ENCODE measurements at regions of chr17 and their contacts with region 1.

Region 1: GRCh38 chr17:27455914-27456680 is at the start of gene KSR1:
- DNase-seq: peak; percentile 45 to 90 (median 79)
- ATAC-seq: peak; percentile 92
- H3K4me3 ChIP-seq: peak within 1 kb of the TSS; percentile 70 to 89
- H3K4me3 Mint-ChIP-seq: peak within 1 kb of the TSS; percentile 90
- H3K27ac ChIP-seq: peak within 1 kb of the TSS; percentile 54 to 56
- H3K27ac Mint-ChIP-seq: peak within 1 kb of the TSS; percentile 38
- H3K4me1 ChIP-seq: peaks cover 19% of the 10 kb centered on the region
- H3K4me1 Mint-ChIP-seq: peaks cover 27% of the 10 kb centered on the region
- H3K27me3 ChIP-seq: no peaks in the 10 kb centered on the region
- H3K27me3 Mint-ChIP-seq: no peaks in the 10 kb centered on the region
- CTCF ChIP-seq: peak; percentile 40
- total RNA-seq, gene KSR1: 23.3 to 25.6 TPM

Region 2: GRCh38 chr17:27293898-27294688 is 162.0 kb before region 1 on chr17 and contains the start of gene WSB1:
- CTCF ChIA-PET with region 1: no interaction called
- POLR2A ChIA-PET with region 1: interaction called, 8 read pairs
- intact Hi-C with region 1: loop called (anchors 1 kb)
- DNase-seq: peak; percentile 86 to 97 (median 92)
- ATAC-seq: peak; percentile 84
- H3K4me3 ChIP-seq: peak within 1 kb of the TSS; percentile 89 to 99
- H3K4me3 Mint-ChIP-seq: peak within 1 kb of the TSS; percentile 93
- H3K27ac ChIP-seq: peak within 1 kb of the TSS; percentile 98 to 99
- H3K27ac Mint-ChIP-seq: peak within 1 kb of the TSS; percentile 100
- H3K4me1 ChIP-seq: peaks cover 27% of the 10 kb centered on the region
- H3K4me1 Mint-ChIP-seq: peaks cover 36% of the 10 kb centered on the region
- H3K27me3 ChIP-seq: no peaks in the 10 kb centered on the region
- H3K27me3 Mint-ChIP-seq: no peaks in the 10 kb centered on the region
- CTCF ChIP-seq: no peak
- total RNA-seq, gene WSB1: 89.0 to 91.1 TPM

Region 3: GRCh38 chr17:27353461-27354050 is 102.5 kb before region 1 on chr17:
- CTCF ChIA-PET with region 1: interaction called, 3 read pairs
- POLR2A ChIA-PET with region 1: no interaction called
- intact Hi-C with region 1: loop called (anchors 1 to 5 kb)
- DNase-seq: peak; percentile 67 to 94 (median 86)
- ATAC-seq: peak; percentile 95
- H3K4me3 ChIP-seq: peak overlapping the region; percentile 66 to 78
- H3K4me3 Mint-ChIP-seq: peak overlapping the region; percentile 77
- H3K27ac ChIP-seq: peak overlapping the region; percentile 68 to 84
- H3K27ac Mint-ChIP-seq: peak overlapping the region; percentile 93
- H3K4me1 ChIP-seq: peaks cover 18% of the 10 kb centered on the region
- H3K4me1 Mint-ChIP-seq: peaks cover 17% of the 10 kb centered on the region
- H3K27me3 ChIP-seq: no peaks in the 10 kb centered on the region
- H3K27me3 Mint-ChIP-seq: no peaks in the 10 kb centered on the region
- CTCF ChIP-seq: peak; percentile 91

Region 4: GRCh38 chr17:27466743-27467375 is 10.8 kb after region 1 on chr17:
- CTCF ChIA-PET with region 1: interaction called, 3 read pairs
- POLR2A ChIA-PET with region 1: interaction called, 13 read pairs
- intact Hi-C with region 1: loop called in 1 of 2 experiments (anchors 2 kb)
- DNase-seq: peak in 6 of 9 experiments; percentile 25 to 63 (median 42)
- ATAC-seq: peak; percentile 73
- H3K4me3 ChIP-seq: no peak overlapping the region
- H3K4me3 Mint-ChIP-seq: peak overlapping the region; percentile 51
- H3K27ac ChIP-seq: peak overlapping the region in 1 of 2 experiments; percentile 22
- H3K27ac Mint-ChIP-seq: peak overlapping the region; percentile 15
- H3K4me1 ChIP-seq: peaks cover 18% of the 10 kb centered on the region
- H3K4me1 Mint-ChIP-seq: peaks cover 37% of the 10 kb centered on the region
- H3K27me3 ChIP-seq: no peaks in the 10 kb centered on the region
- H3K27me3 Mint-ChIP-seq: no peaks in the 10 kb centered on the region
- CTCF ChIP-seq: no peak

Region 5: GRCh38 chr17:27473748-27474609 is 17.9 kb after region 1 on chr17:
- CTCF ChIA-PET with region 1: interaction called, 3 read pairs
- POLR2A ChIA-PET with region 1: interaction called, 10 read pairs
- intact Hi-C with region 1: loop called (anchors 1 to 2 kb)
- DNase-seq: peak; percentile 18 to 90 (median 64)
- ATAC-seq: peak; percentile 3
- H3K4me3 ChIP-seq: peak overlapping the region in 1 of 2 experiments; percentile 29
- H3K4me3 Mint-ChIP-seq: peak overlapping the region; percentile 57
- H3K27ac ChIP-seq: peak overlapping the region; percentile 22 to 90
- H3K27ac Mint-ChIP-seq: peak overlapping the region; percentile 94
- H3K4me1 ChIP-seq: peaks cover 36% of the 10 kb centered on the region
- H3K4me1 Mint-ChIP-seq: peaks cover 57% of the 10 kb centered on the region
- H3K27me3 ChIP-seq: no peaks in the 10 kb centered on the region
- H3K27me3 Mint-ChIP-seq: no peaks in the 10 kb centered on the region
- CTCF ChIP-seq: no peak

Region 6: GRCh38 chr17:27489045-27489715 is 33.1 kb after region 1 on chr17:
- CTCF ChIA-PET with region 1: no interaction called
- POLR2A ChIA-PET with region 1: no interaction called
- intact Hi-C with region 1: no loop called
- DNase-seq: no peak
- ATAC-seq: no peak
- H3K4me3 ChIP-seq: no peak overlapping the region
- H3K4me3 Mint-ChIP-seq: no peak overlapping the region
- H3K27ac ChIP-seq: no peak overlapping the region
- H3K27ac Mint-ChIP-seq: no peak overlapping the region
- H3K4me1 ChIP-seq: no peaks in the 10 kb centered on the region
- H3K4me1 Mint-ChIP-seq: no peaks in the 10 kb centered on the region
- H3K27me3 ChIP-seq: no peaks in the 10 kb centered on the region
- H3K27me3 Mint-ChIP-seq: no peaks in the 10 kb centered on the region
- CTCF ChIP-seq: no peak

Region 7: GRCh38 chr17:27544350-27545131 is 88.4 kb after region 1 on chr17:
- CTCF ChIA-PET with region 1: no interaction called
- POLR2A ChIA-PET with region 1: no interaction called
- intact Hi-C with region 1: loop called in 1 of 2 experiments (anchors 10 kb)
- DNase-seq: peak in 3 of 9 experiments; percentile 17 to 61 (median 44)
- ATAC-seq: peak; percentile 62
- H3K4me3 ChIP-seq: no peak overlapping the region
- H3K4me3 Mint-ChIP-seq: no peak overlapping the region
- H3K27ac ChIP-seq: no peak overlapping the region
- H3K27ac Mint-ChIP-seq: peak overlapping the region; percentile 37
- H3K4me1 ChIP-seq: peaks cover 13% of the 10 kb centered on the region
- H3K4me1 Mint-ChIP-seq: peaks cover 50% of the 10 kb centered on the region
- H3K27me3 ChIP-seq: no peaks in the 10 kb centered on the region
- H3K27me3 Mint-ChIP-seq: no peaks in the 10 kb centered on the region
- CTCF ChIP-seq: no peak

Region 8: DNA sequence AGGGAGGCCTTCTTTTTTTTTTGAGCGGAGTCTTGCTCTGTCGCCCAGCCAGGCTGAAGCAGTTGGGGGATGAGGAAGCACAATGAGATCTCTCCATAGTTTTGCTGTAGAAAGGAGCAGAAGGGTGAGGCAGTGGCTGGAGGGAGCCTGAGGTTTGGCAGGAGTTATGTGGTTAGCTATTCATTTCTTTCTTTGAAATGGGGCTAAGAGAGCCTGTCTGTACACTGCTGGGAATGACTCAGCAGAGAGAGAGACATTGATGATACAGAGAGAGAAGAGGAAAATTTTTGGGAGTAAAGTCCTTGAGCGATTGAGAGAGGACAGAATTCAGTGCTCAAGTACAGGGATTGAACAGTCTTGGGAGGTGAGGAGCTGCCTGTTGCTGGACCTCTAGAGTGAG is 322.1 kb after region 1 on chr17:
- CTCF ChIA-PET with region 1: no interaction called
- POLR2A ChIA-PET with region 1: no interaction called
- intact Hi-C with region 1: no loop called
- DNase-seq: no peak
- ATAC-seq: no peak
- H3K4me3 ChIP-seq: no peak overlapping the region
- H3K4me3 Mint-ChIP-seq: no peak overlapping the region
- H3K27ac ChIP-seq: no peak overlapping the region
- H3K27ac Mint-ChIP-seq: no peak overlapping the region
- H3K4me1 ChIP-seq: no peaks in the 10 kb centered on the region
- H3K4me1 Mint-ChIP-seq: no peaks in the 10 kb centered on the region
- H3K27me3 ChIP-seq: no peaks in the 10 kb centered on the region
- H3K27me3 Mint-ChIP-seq: no peaks in the 10 kb centered on the region
- CTCF ChIP-seq: no peak

Region 9: DNA sequence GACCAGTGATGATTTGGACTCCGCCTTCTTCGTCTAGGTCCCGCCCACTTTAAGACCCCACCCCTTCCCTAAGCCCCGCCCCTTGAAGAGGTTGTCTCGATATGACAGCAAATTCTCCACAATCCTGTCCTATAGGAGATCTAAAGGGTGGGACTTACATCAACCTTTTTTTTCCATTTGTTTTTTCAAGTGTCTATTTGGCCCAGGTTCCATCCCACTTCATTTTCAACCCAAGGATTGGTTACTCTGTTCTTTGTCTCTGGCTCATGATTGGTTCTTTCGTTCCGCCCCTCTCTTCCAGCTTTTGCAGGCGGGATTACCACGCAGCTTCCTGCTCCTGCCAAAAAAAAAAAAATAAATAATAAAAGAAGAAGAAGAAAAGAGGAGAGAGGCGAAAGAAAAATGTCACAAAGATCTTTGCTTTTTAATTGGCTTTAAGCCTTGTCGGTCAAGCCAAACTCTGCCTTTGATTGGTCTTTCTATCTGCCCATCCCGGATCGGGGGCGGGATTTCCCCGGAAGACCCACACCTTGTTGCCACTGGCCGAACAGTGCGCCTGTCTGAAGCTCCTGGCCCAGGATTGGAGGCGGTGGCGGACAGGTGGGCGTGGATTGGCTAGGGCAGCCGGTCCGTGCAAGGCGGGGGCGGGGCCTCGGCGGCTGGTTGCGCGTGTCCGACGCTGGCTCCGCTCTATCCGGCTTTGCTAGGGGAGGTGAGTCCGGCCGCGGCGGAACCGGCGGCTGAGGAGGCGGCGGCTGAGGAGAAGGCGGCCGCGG is 585.2 kb after region 1 on chr17:
- CTCF ChIA-PET with region 1: no interaction called
- POLR2A ChIA-PET with region 1: no interaction called
- intact Hi-C with region 1: loop called in 1 of 2 experiments (anchors 5 kb)
- DNase-seq: peak; percentile 97 to 100 (median 99)
- ATAC-seq: peak; percentile 91
- H3K4me3 ChIP-seq: peak overlapping the region; percentile 62 to 76
- H3K4me3 Mint-ChIP-seq: peak overlapping the region; percentile 87
- H3K27ac ChIP-seq: peak overlapping the region; percentile 24 to 77
- H3K27ac Mint-ChIP-seq: peak overlapping the region; percentile 89
- H3K4me1 ChIP-seq: peaks cover 27% of the 10 kb centered on the region
- H3K4me1 Mint-ChIP-seq: peaks cover 53% of the 10 kb centered on the region
- H3K27me3 ChIP-seq: no peaks in the 10 kb centered on the region
- H3K27me3 Mint-ChIP-seq: no peaks in the 10 kb centered on the region
- CTCF ChIP-seq: no peak